ENCODE measurements at regions of chr17 and their contacts with region 1.

Region 1: GRCh38 chr17:13594762-13595598 is 6.7 kb downstream of the HS3ST3A1 start:
- DNase-seq: peak; percentile 94
- H3K4me3 Mint-ChIP-seq: peak overlapping the region; percentile 51
- H3K27ac Mint-ChIP-seq: peak overlapping the region; percentile 71
- H3K4me1 Mint-ChIP-seq: peaks cover 44% of the 10 kb centered on the region
- H3K27me3 Mint-ChIP-seq: no peaks in the 10 kb centered on the region
- CTCF ChIP-seq: peak; percentile 86

Region 2: DNA sequence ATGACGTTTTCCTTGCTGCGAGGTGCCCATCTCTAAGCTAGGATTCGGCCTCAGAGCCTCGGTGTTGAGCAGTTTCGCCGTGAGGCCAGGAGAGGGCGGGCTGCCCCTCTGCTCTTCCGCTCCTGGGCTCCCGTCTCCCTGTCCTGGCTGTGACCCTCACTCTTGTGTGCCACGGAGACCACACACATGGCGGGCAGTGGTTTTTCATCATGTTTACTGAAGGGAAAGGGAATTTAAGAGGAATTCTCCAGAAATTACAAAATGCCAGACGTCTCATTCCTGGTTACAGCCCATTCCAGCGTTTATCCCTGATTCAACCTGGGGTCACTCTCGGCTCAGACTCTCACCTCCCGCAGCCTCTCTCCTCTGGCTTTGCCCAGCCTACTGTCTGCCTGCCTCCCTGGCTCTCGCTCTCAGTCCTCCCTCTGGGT is 480.4 kb before region 1 on chr17:
- CTCF ChIA-PET with region 1: interaction called, 4 read pairs
- POLR2A ChIA-PET with region 1: no interaction called
- intact Hi-C with region 1: loop called (anchors 10 kb)
- DNase-seq: peak; percentile 55
- H3K4me3 Mint-ChIP-seq: no peak overlapping the region
- H3K27ac Mint-ChIP-seq: no peak overlapping the region
- H3K4me1 Mint-ChIP-seq: no peaks in the 10 kb centered on the region
- H3K27me3 Mint-ChIP-seq: peaks cover 64% of the 10 kb centered on the region
- CTCF ChIP-seq: peak; percentile 80

Region 3: GRCh38 chr17:13346996-13347765 is 247.8 kb before region 1 on chr17:
- CTCF ChIA-PET with region 1: interaction called, 12 read pairs
- POLR2A ChIA-PET with region 1: interaction called, 5 read pairs
- intact Hi-C with region 1: loop called (anchors 2 kb)
- DNase-seq: peak; percentile 97
- H3K4me3 Mint-ChIP-seq: peak overlapping the region; percentile 67
- H3K27ac Mint-ChIP-seq: peak overlapping the region; percentile 83
- H3K4me1 Mint-ChIP-seq: peaks cover 55% of the 10 kb centered on the region
- H3K27me3 Mint-ChIP-seq: no peaks in the 10 kb centered on the region
- CTCF ChIP-seq: no peak

Region 4: GRCh38 chr17:13727551-13728102 is 132.6 kb after region 1 on chr17:
- CTCF ChIA-PET with region 1: no interaction called
- POLR2A ChIA-PET with region 1: interaction called, 3 read pairs
- intact Hi-C with region 1: loop called (anchors 2 kb)
- DNase-seq: peak; percentile 75
- H3K4me3 Mint-ChIP-seq: no peak overlapping the region
- H3K27ac Mint-ChIP-seq: peak overlapping the region; percentile 68
- H3K4me1 Mint-ChIP-seq: peaks cover 27% of the 10 kb centered on the region
- H3K27me3 Mint-ChIP-seq: no peaks in the 10 kb centered on the region
- CTCF ChIP-seq: no peak

Region 5: DNA sequence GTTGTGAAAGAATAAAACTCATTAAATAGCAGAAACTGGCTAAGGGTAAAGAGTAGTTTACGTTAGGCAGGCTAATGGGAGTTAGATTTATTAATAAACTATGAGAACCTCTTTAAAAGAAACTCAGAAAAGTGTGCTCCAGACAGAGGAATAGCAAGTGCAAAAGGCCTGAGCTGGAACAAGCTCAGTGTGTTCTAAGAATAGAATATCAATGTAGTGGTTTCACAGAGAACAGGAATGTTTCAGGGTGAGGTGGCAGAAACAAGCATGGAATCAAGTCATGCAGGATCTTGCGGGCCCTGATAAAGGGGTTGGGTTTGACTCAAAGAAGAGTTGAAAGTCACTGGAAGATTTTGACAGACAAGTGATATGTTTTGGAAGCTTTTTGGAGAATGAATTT is 170.7 kb after region 1 on chr17:
- CTCF ChIA-PET with region 1: no interaction called
- POLR2A ChIA-PET with region 1: no interaction called
- intact Hi-C with region 1: no loop called
- DNase-seq: no peak
- H3K4me3 Mint-ChIP-seq: no peak overlapping the region
- H3K27ac Mint-ChIP-seq: no peak overlapping the region
- H3K4me1 Mint-ChIP-seq: no peaks in the 10 kb centered on the region
- H3K27me3 Mint-ChIP-seq: no peaks in the 10 kb centered on the region
- CTCF ChIP-seq: no peak

Region 6: GRCh38 chr17:14203388-14203787 is 608.4 kb after region 1 on chr17:
- CTCF ChIA-PET with region 1: interaction called, 6 read pairs
- POLR2A ChIA-PET with region 1: no interaction called
- intact Hi-C with region 1: loop called (anchors 2 kb)
- DNase-seq: no peak
- H3K4me3 Mint-ChIP-seq: no peak overlapping the region
- H3K27ac Mint-ChIP-seq: no peak overlapping the region
- H3K4me1 Mint-ChIP-seq: peaks cover 34% of the 10 kb centered on the region
- H3K27me3 Mint-ChIP-seq: no peaks in the 10 kb centered on the region
- CTCF ChIP-seq: no peak

Region 7: DNA sequence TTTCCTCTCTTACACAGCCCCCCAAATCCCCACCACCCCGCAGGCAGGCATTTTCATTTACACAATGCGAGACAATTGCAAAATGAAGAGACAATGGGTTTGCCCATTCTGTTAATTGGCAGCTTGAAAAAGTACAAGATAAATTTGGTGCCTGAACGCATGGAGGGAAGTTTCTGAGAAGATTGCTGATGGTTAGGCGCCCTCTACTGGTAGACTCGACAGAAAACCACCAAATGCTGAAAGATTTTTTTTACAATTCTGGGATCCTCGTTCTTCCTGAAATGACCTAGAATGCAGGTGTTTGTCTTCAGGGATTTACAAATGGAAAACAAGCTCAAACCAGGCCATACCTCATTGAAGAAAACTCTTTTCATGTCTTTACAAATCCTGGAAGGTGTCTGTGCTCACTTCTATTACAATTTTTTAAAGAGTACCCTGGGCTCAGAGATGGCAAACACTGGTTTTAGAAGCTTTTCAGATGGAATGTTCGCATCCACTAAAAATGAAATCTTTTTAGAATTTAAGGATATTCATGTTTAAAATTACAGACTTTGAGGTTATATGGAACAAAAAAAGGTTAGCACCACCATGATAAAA is 1331.6 kb after region 1 on chr17:
- CTCF ChIA-PET with region 1: interaction called, 4 read pairs
- POLR2A ChIA-PET with region 1: interaction called, 4 read pairs
- intact Hi-C with region 1: loop called (anchors 1 kb)
- DNase-seq: peak; percentile 83
- H3K4me3 Mint-ChIP-seq: no peak overlapping the region
- H3K27ac Mint-ChIP-seq: no peak overlapping the region
- H3K4me1 Mint-ChIP-seq: no peaks in the 10 kb centered on the region
- H3K27me3 Mint-ChIP-seq: peaks cover 14% of the 10 kb centered on the region
- CTCF ChIP-seq: peak; percentile 80

Region 8: DNA sequence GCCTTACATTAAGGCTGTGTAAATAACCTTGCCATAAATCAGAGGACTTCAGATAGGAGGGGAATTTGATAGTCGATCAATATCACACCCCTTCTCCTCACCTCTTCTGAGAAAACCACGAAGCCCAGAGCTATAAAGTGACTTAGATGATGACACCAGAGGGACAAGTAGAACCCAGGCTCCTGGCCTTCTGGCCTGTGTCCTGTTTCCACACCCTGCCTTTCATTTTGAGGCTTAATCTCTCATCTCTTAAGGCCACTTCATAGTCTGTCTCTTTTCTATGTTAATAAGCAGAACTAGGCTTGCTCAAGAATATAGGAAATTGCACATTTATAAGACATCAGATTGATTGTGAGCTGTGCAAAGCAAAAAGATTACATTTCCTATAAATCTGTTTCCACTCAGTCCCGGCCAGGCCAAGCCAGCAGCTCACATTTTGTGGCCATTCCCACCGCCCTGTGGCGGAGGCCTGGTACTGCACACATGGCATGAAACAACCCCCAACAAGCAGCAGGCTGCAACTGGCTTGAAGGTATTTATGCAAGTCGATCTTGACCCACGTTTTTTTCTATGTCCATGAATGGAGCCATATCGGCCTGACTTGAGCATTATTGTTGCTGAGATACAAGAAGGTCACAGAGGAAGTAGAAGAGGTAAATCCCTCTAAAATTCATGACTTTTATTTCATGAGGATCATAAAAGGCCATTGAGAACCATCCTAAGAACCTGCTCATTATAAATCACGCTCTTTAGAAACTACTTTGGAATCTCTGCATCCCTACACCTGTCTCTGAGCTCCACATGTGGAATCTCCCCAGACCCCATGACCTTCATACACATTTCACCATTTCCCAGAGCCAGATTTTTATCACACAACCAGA is 1576.4 kb after region 1 on chr17:
- CTCF ChIA-PET with region 1: interaction called, 7 read pairs
- POLR2A ChIA-PET with region 1: no interaction called
- intact Hi-C with region 1: loop called (anchors 1 kb)
- DNase-seq: peak; percentile 80
- H3K4me3 Mint-ChIP-seq: no peak overlapping the region
- H3K27ac Mint-ChIP-seq: no peak overlapping the region
- H3K4me1 Mint-ChIP-seq: peaks cover 11% of the 10 kb centered on the region
- H3K27me3 Mint-ChIP-seq: peaks cover 14% of the 10 kb centered on the region
- CTCF ChIP-seq: peak; percentile 81

Measured in MCF 10A (cell line).